CD4-positive, alpha-beta T cell (primary cell): ENCODE measurements at regions of chr1 and their contacts with region 1.

Region 1: DNA sequence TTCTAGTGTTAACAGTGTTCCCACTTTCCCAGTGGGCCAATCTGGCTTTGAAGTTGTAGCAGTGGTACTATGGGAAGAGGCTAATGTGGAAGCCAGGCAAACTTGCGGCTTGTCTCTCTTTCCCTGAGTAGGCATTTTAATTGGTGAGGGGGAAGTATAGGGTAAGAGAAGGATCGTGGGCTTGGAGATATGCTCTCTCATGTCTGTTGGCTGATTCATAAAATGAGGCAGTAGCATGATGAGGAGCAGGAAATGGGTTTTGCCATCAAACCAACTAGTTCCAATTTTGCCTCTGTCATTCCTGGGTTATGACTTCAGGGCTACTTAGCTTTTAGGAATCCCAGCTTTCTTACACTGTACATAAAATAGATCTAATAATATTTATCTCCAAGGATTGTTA is 12.1 kb downstream of the C8A start:
- DNase-seq: no peak
- ATAC-seq: no peak
- H3K4me3 ChIP-seq: no peak overlapping the region
- H3K4me3 Mint-ChIP-seq: no peak overlapping the region
- H3K27ac ChIP-seq: no peak overlapping the region
- H3K27ac Mint-ChIP-seq: no peak overlapping the region
- H3K4me1 ChIP-seq: no peaks in the 10 kb centered on the region
- H3K4me1 Mint-ChIP-seq: no peaks in the 10 kb centered on the region
- H3K27me3 ChIP-seq: no peaks in the 10 kb centered on the region
- H3K27me3 Mint-ChIP-seq: peaks cover 19% of the 10 kb centered on the region
- CTCF ChIP-seq: no peak

Region 2: GRCh38 chr1:56837244-56837939 is 29.3 kb before region 1 on chr1:
- CTCF ChIA-PET with region 1: no interaction called
- POLR2A ChIA-PET with region 1: no interaction called
- intact Hi-C with region 1: no loop called
- DNase-seq: no peak
- ATAC-seq: no peak
- H3K4me3 ChIP-seq: no peak overlapping the region
- H3K4me3 Mint-ChIP-seq: no peak overlapping the region
- H3K27ac ChIP-seq: no peak overlapping the region
- H3K27ac Mint-ChIP-seq: no peak overlapping the region
- H3K4me1 ChIP-seq: no peaks in the 10 kb centered on the region
- H3K4me1 Mint-ChIP-seq: peaks cover under 1% of the 10 kb centered on the region
- H3K27me3 ChIP-seq: no peaks in the 10 kb centered on the region
- H3K27me3 Mint-ChIP-seq: peaks cover 22% of the 10 kb centered on the region
- CTCF ChIP-seq: no peak

Region 3: DNA sequence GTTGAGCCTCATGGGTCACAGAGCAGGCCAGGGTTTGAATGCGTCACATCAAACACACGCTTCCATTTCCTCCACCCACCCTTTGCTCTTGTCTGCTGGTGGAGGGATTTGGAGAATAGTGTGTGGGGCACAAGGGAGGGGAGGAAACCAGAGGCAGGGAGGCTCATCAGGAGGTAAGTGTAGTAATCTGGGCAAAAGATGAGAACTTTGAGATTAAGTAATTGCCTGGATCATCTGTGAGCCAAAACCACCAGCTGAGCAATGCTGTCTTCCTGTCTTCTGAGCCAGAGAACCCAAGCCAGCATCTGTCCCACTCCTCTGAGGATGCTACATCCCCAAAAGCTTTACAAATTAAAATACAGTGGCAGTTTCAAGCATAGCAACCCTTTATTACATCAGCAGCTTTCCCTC is 53.9 kb after region 1 on chr1:
- CTCF ChIA-PET with region 1: no interaction called
- POLR2A ChIA-PET with region 1: no interaction called
- intact Hi-C with region 1: loop called in 1 of 2 experiments (anchors 10 kb)
- DNase-seq: no peak
- ATAC-seq: no peak
- H3K4me3 ChIP-seq: no peak overlapping the region
- H3K4me3 Mint-ChIP-seq: no peak overlapping the region
- H3K27ac ChIP-seq: no peak overlapping the region
- H3K27ac Mint-ChIP-seq: no peak overlapping the region
- H3K4me1 ChIP-seq: no peaks in the 10 kb centered on the region
- H3K4me1 Mint-ChIP-seq: no peaks in the 10 kb centered on the region
- H3K27me3 ChIP-seq: no peaks in the 10 kb centered on the region
- H3K27me3 Mint-ChIP-seq: peaks cover 22% of the 10 kb centered on the region
- CTCF ChIP-seq: no peak